ENCODE measurements at regions of chr20 and their contacts with region 1.

Region 1: DNA sequence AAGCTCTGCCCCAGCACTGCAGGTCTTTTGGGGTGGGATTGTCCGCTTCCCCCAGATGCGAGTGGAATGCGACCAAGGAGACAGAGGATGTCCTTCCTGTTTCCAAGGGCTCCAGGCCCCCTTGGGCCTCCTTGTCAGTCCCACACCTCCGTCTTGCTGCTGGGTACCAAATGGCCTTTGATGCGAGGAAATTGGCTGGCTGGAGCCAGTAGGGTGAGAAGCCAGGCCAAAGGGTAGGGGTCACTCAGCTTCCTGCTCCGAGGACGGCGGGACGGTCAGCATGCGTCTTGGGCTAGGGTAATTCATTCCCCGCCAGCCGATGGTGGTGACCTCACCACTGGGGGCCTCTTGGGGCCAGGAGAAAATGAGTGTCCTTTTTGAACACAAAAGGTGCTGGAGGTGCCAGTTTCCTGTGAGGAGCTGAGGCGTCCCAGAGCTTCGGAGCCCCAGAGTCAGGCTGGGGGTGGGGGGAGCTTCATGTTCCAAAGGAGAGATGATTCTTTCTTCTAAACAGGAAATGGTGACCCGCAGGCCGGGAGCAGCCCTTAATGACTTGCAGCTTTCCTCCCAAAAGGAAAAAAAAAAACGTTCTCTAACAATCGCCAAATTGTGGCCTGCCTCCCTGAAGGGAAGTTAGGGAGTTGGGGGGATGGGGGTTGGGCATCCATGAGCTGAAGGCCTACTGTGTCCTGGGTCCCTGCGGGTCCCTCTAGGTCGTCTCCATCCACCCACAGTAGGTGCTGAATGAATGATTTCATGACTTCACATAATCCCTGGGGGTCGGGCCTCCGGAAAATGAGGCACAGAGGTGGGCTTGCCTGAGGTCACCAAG is 6.7 kb downstream of the SNAI1 start:
- DNase-seq: peak in 3 of 4 experiments; percentile 28 to 73 (median 67)
- ATAC-seq: peak; percentile 62
- H3K4me3 ChIP-seq: no peak overlapping the region
- H3K27ac ChIP-seq: peak overlapping the region; percentile 80
- H3K4me1 ChIP-seq: peaks cover 47 to 55% of the 10 kb centered on the region in 2 experiments
- H3K27me3 ChIP-seq: no peaks in the 10 kb centered on the region
- CTCF ChIP-seq: no peak
- EP300 ChIP-seq: peak; percentile 47; the same call in 1 of the 2 replicates
- POLR2A ChIP-seq: no peak
- RAD21 ChIP-seq: 0 out of 4 replicates have a peak, but pooled peaks of 1 of the 2 experiments have one; percentile 12

Region 2: GRCh38 chr20:50012282-50013263 is 23.1 kb after region 1 on chr20:
- CTCF ChIA-PET with region 1: no interaction called
- POLR2A ChIA-PET with region 1: interaction called, 40 read pairs
- in situ Hi-C with region 1: no loop called
- intact Hi-C with region 1: no loop called
- DNase-seq: peak; percentile 78 to 88 (median 85)
- ATAC-seq: peak; percentile 80
- H3K4me3 ChIP-seq: peak overlapping the region; percentile 27
- H3K27ac ChIP-seq: peak overlapping the region; percentile 54
- H3K4me1 ChIP-seq: peaks cover 39 to 49% of the 10 kb centered on the region in 2 experiments
- H3K27me3 ChIP-seq: no peaks in the 10 kb centered on the region
- CTCF ChIP-seq: no peak
- EP300 ChIP-seq: peak; percentile 83
- POLR2A ChIP-seq: no peak
- RAD21 ChIP-seq: no peak

Measured in K562 (cell line).